SK-N-SH (cell line): ENCODE measurements at regions of chr15 and their contacts with region 1.

Region 1: GRCh38 chr15:35751413-35752133 is 205.6 kb upstream of the DPH6 start:
- DNase-seq: peak; percentile 55
- H3K4me3 ChIP-seq: no peak overlapping the region; a peak in 1 of 4 replicates
- H3K27ac ChIP-seq: no peak overlapping the region; a peak in 1 of 4 replicates
- H3K4me1 ChIP-seq: peaks cover 0 to 19% of the 10 kb centered on the region in 2 experiments; a peak in 3 of 4 replicates
- H3K27me3 ChIP-seq: no peaks in the 10 kb centered on the region
- CTCF ChIP-seq: peak; percentile 84
- EP300 ChIP-seq: no peak; a peak in 1 of 4 replicates
- RAD21 ChIP-seq: peak; percentile 93

Region 2: DNA sequence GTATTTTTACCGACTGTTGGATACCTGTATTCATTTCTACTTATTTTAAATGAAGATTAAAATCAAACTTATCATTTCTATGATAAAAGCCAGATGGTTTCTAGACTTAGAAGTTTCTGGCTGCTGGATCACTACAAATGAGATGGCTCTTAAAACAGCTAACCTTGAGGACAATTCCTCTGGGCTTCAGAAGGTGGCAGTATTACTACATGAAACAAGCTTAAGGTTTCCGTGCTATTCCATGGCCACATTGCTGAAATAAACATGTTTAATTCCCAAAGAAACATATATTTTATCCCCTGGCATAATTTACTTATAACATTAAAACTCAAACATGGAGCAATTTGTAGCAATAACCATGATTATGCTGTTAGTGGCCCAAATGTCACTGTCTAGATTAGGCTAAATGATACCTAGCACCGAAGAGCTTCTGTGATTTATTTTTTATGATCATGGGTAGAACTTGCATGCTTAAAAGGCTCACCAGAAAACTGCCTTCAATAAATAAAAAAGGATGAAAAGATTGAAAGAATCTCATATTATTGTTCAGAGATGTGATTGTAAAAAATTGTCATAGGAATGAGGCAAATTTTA is 462.5 kb before region 1 on chr15:
- CTCF ChIA-PET with region 1: interaction called, 13 read pairs
- POLR2A ChIA-PET with region 1: no interaction called
- DNase-seq: peak; percentile 58
- H3K4me3 ChIP-seq: no peak overlapping the region
- H3K27ac ChIP-seq: peak overlapping the region in 1 of 2 experiments; percentile 90; a peak in 2 of 4 replicates
- H3K4me1 ChIP-seq: peaks cover 13 to 36% of the 10 kb centered on the region in 2 experiments; a peak in 3 of 4 replicates
- H3K27me3 ChIP-seq: no peaks in the 10 kb centered on the region
- CTCF ChIP-seq: peak; percentile 91
- EP300 ChIP-seq: 0 out of 4 replicates have a peak, but pooled peaks of 1 of the 2 experiments have one; percentile 2
- RAD21 ChIP-seq: peak; percentile 97

Region 3: GRCh38 chr15:35740761-35741160 is 10.8 kb before region 1 on chr15:
- CTCF ChIA-PET with region 1: interaction called, 24 read pairs
- POLR2A ChIA-PET with region 1: no interaction called
- DNase-seq: peak; percentile 24
- H3K4me3 ChIP-seq: no peak overlapping the region
- H3K27ac ChIP-seq: peak overlapping the region in 1 of 2 experiments; percentile 53; a peak in 2 of 4 replicates
- H3K4me1 ChIP-seq: peaks cover 11 to 14% of the 10 kb centered on the region in 2 experiments; a peak in 3 of 4 replicates
- H3K27me3 ChIP-seq: no peaks in the 10 kb centered on the region
- CTCF ChIP-seq: no peak
- EP300 ChIP-seq: no peak
- RAD21 ChIP-seq: no peak

Region 4: GRCh38 chr15:35771746-35772442 is 20.3 kb after region 1 on chr15:
- CTCF ChIA-PET with region 1: interaction called, 10 read pairs
- POLR2A ChIA-PET with region 1: no interaction called
- DNase-seq: no peak
- H3K4me3 ChIP-seq: no peak overlapping the region
- H3K27ac ChIP-seq: peak overlapping the region in 1 of 2 experiments; percentile 34; a peak in 1 of 4 replicates
- H3K4me1 ChIP-seq: peaks cover 0 to 6% of the 10 kb centered on the region in 2 experiments; a peak in 2 of 4 replicates
- H3K27me3 ChIP-seq: no peaks in the 10 kb centered on the region
- CTCF ChIP-seq: no peak
- EP300 ChIP-seq: no peak
- RAD21 ChIP-seq: no peak

Region 5: GRCh38 chr15:35912196-35912595 is 160.6 kb after region 1 on chr15:
- CTCF ChIA-PET with region 1: interaction called, 13 read pairs
- POLR2A ChIA-PET with region 1: no interaction called
- DNase-seq: peak; percentile 16
- H3K4me3 ChIP-seq: no peak overlapping the region
- H3K27ac ChIP-seq: no peak overlapping the region
- H3K4me1 ChIP-seq: peaks cover 0 to 7% of the 10 kb centered on the region in 2 experiments; a peak in 2 of 4 replicates
- H3K27me3 ChIP-seq: no peaks in the 10 kb centered on the region
- CTCF ChIP-seq: peak; percentile 35
- EP300 ChIP-seq: no peak
- RAD21 ChIP-seq: peak; percentile 69

Region 6: DNA sequence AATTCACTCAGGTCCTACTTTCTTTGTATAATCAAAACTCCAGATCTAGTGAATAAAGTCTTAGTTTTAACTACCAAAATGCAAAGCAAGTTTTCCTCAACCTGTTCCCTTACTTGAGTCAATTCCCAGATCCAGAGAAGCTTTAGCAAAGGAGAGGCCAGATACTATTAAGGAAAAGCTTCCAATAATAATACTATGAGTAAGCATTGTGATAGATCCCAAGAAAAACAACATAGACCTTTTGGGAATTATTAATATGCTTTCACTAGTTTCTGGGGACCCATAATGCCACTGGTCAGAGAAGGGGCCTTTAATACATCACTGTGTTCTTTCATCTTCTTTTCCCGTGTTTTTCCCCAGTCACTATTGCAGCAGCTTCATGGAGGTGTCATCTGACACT is 487.9 kb after region 1 on chr15:
- CTCF ChIA-PET with region 1: no interaction called
- POLR2A ChIA-PET with region 1: no interaction called
- DNase-seq: no peak
- H3K4me3 ChIP-seq: no peak overlapping the region
- H3K27ac ChIP-seq: no peak overlapping the region
- H3K4me1 ChIP-seq: no peaks in the 10 kb centered on the region
- H3K27me3 ChIP-seq: no peaks in the 10 kb centered on the region
- CTCF ChIP-seq: no peak
- EP300 ChIP-seq: no peak
- RAD21 ChIP-seq: no peak